ENCODE measurements at regions of chr15 and their contacts with region 1.

Region 1: DNA sequence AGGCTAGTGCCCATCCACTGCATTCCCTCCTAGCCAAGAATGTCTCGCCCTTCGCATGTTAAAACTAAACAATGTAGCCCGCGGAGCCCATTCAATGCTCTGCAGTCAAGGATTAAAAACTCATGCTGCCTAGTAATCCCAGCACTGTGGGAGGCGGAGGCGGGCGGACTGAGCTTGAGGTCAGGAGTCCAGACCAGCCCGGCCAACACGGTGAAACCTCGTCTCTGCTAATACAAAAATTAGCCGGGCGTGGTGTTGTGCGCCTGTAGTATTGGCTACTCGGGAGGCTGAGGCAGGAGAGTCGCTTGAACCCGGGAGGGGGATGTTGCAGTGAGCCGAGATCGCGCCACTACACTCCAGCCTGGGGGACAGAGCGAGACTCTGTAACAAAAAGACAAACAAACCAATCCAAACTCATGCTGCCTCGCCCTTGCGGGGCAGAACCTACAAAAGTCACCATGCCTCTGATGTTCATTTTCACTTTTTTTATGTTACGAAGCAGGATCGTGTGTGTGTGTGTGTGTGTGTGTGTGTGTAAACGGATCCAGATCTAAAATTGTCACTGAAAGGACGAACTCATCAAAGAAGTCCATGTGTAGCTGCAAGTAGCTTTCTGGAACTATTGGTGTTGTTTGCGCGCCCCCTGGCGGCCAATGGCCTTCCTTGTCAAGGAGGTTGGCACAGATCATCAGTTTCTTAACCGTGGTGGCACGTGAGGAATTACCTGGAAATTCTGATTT is 54.8 kb upstream of the SPESP1 start:
- DNase-seq: peak; percentile 97
- H3K4me3 ChIP-seq: peak overlapping the region in 1 of 2 donors; percentile 15
- H3K27ac ChIP-seq: no peak overlapping the region
- H3K4me1 ChIP-seq: peaks cover 5% of the 10 kb centered on the region
- H3K27me3 ChIP-seq: no peaks in the 10 kb centered on the region
- CTCF ChIP-seq: peak; percentile 90 to 96 (median 93)
- POLR2A ChIP-seq: no peak

Region 2: GRCh38 chr15:68559345-68560310 is 315.9 kb before region 1 on chr15:
- intact Hi-C with region 1: loop called (anchors 10 kb)
- DNase-seq: peak; percentile 88
- H3K4me3 ChIP-seq: peak overlapping the region; percentile 45 to 51
- H3K27ac ChIP-seq: no peak overlapping the region
- H3K4me1 ChIP-seq: no peaks in the 10 kb centered on the region
- H3K27me3 ChIP-seq: no peaks in the 10 kb centered on the region
- CTCF ChIP-seq: peak; percentile 97 to 98 (median 98)
- POLR2A ChIP-seq: no peak

Measured in testis (tissue), 5 donors.